ENCODE measurements at regions of chr17 and their contacts with region 1.

Region 1: DNA sequence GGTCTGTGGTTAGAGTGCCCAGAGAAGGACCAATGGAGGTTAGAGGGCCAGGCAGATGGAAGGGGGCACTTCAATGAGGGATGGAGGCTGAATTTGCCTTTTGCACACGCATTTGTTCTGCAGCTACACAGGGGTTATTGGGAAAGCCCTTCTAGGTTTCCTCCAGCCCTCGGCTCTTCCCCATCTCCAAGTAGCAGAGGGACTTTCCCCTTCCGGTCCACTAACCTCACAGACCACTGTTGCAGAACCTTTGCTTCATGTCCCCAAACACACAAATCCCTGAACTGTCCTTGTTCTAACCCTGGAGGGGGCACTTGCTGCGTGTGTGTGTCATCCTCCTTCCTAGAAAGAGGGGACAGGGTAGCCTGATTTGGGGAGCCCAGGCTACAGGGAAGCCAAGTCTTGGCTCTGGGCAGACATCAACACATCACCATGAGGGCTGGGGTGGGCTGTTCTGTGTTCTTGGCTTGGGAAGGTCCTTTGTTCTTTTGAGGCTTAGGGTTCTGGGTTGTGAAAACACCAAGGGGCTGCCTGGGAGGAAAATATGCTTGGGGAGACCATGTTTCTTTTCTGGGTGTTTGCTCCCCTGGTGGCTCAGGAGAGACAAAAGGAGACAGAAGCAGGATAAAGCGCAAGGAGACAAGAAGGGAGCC is 7.3 kb upstream of the NR1D1 start:
- DNase-seq: peak in 3 of 9 donors; percentile 17 to 51 (median 25)
- ATAC-seq: peak; percentile 3
- H3K4me3 ChIP-seq: peak overlapping the region; percentile 3
- H3K4me3 Mint-ChIP-seq: peak overlapping the region; percentile 50 to 88 (median 76)
- H3K27ac ChIP-seq: peak overlapping the region; percentile 87
- H3K27ac Mint-ChIP-seq: peak overlapping the region; percentile 82 to 100 (median 99)
- H3K4me1 ChIP-seq: peaks cover 92 to 98% of the 10 kb centered on the region in 2 donors
- H3K4me1 Mint-ChIP-seq: peaks cover 84 to 99% (median 95%) of the 10 kb centered on the region in 7 donors
- H3K27me3 ChIP-seq: no peaks in the 10 kb centered on the region
- H3K27me3 Mint-ChIP-seq: peaks cover 0 to 24% (median 0%) of the 10 kb centered on the region in 5 donors

Region 2: DNA sequence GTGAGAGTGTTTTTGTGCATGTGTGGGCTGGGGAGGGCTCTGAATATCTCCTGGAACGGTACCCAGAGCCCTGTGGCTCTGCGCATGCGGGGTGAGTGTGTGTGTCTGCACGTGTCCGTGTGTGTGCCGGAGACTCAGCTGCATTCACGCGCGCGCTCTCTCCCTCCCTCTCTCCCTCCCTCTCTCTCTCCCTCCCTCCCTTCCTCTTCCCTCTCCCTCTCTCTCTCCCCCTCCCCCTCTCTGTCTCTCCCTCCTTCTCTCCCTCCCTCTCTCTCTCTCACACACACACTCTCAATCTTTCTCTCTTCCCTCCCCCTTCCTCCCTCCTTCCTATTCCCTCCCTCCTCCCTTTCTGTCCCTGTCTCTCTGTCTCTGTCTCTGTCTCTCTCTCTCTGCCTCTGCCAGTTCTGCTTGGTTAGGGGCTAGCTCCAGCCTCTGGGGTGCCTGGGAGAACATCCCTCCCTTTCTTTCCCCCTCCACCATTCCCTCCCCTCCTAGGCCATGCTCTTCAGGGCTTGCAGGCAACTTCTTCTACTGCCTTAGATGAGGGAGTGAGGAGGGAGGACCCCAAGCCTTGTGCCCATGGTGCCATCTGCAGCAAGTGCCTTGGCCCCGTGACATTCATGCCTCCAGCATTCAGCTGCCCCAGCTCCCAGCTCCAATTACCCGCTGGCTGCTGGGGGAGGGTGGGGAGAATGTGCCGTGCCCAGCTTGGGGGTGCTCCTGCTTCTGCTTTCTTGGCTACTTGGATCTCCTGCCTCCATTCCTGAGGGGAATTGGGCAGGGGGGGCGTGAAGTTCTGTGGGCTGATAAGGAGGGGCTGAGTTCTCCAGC is 38.5 kb before region 1 on chr17:
- CTCF ChIA-PET with region 1: interaction called, 127 read pairs
- POLR2A ChIA-PET with region 1: interaction called, 60 read pairs
- intact Hi-C with region 1: loop called in 1 of 2 experiments (anchors 1 kb)
- DNase-seq: peak; percentile 60 to 84 (median 75)
- ATAC-seq: peak; percentile 79
- H3K4me3 ChIP-seq: peak overlapping the region; percentile 45
- H3K4me3 Mint-ChIP-seq: peak overlapping the region; percentile 85 to 94 (median 90)
- H3K27ac ChIP-seq: peak overlapping the region; percentile 75
- H3K27ac Mint-ChIP-seq: peak overlapping the region; percentile 83 to 96 (median 95)
- H3K4me1 ChIP-seq: peaks cover 42 to 71% of the 10 kb centered on the region in 2 donors
- H3K4me1 Mint-ChIP-seq: peaks cover 40 to 93% (median 69%) of the 10 kb centered on the region in 7 donors
- H3K27me3 ChIP-seq: no peaks in the 10 kb centered on the region
- H3K27me3 Mint-ChIP-seq: peaks cover 0 to 12% (median 0%) of the 10 kb centered on the region in 5 donors

Region 3: DNA sequence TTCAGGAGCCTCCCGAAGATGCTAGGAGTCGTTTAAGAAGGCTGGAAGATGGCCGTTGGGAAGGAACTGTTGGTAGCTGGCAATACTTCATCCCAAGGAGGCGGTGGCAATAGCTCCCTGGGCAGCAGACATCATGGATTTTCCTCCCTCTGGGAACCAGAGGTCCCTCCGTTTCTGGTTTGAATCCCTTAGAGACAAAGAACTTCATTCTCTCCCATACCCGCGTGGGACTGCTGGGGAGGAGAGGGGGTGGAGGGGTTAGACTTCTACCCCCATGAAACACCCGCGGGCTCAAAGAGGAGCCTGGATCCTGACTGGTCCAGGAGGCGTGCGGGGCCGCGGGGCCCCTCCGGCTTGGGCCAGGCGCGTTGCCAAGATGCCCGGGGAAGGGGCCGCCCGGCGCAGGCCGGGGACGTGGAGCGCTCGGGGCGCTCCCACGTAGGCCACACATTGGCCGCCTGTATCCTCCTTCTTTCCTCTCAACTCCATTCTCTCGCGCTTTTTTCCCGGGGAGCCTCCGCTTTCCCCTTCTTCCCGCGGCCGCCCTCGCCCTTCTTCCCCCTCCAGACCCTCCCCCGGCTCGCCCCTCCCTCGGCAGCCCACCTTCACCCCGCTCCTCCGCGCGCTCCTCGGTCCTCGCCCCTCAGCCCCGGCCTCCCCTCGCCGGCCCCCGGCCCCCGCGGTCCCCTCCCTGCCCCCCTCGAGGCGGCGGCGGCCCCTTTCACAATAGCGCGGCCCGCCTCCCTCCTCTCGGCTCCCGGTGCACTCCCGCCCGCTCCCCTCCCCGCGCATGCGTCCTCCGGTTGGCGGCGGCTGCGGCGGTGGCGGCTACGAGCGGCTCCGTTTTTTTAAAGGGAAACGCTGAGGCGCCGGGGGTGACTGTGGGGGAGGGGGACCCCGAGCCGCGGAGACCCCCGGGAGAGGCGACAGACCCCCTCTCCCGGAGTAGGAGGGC is 13.8 kb after region 1 on chr17 and contains the start of gene MSL1:
- CTCF ChIA-PET with region 1: interaction called, 52 read pairs
- POLR2A ChIA-PET with region 1: interaction called, 291 read pairs
- intact Hi-C with region 1: loop called in 1 of 2 experiments (anchors 2 kb)
- DNase-seq: peak; percentile 81 to 95 (median 86)
- ATAC-seq: peak; percentile 82
- H3K4me3 ChIP-seq: peak within 1 kb of the TSS; percentile 86
- H3K4me3 Mint-ChIP-seq: peak within 1 kb of the TSS; percentile 65 to 99 (median 86)
- H3K27ac ChIP-seq: peak within 1 kb of the TSS; percentile 82
- H3K27ac Mint-ChIP-seq: peak within 1 kb of the TSS; percentile 38 to 97 (median 84)
- H3K4me1 ChIP-seq: peaks cover 12 to 16% of the 10 kb centered on the region in 2 donors
- H3K4me1 Mint-ChIP-seq: peaks cover 32 to 47% (median 38%) of the 10 kb centered on the region in 7 donors
- H3K27me3 ChIP-seq: no peaks in the 10 kb centered on the region
- H3K27me3 Mint-ChIP-seq: no peaks in the 10 kb centered on the region
- total RNA-seq, gene MSL1: 97.0 to 145 (median 113) TPM